Activated T-helper 1 cell treated with anti-CD3 and anti-CD28 coated beads, Interleukin-12 subunit alpha, Interleukin-12 subunit beta, Interleukin-2, Interleukin-4 antibody, amounts not matched to agents 30 ng/mL and 10 ng/mL and 1 ng/mL, durations not matched to agents 14 hours and 24 hours and 36 hours (primary cell): ENCODE measurements at regions of chr14 and their contacts with region 1.

Region 1: DNA sequence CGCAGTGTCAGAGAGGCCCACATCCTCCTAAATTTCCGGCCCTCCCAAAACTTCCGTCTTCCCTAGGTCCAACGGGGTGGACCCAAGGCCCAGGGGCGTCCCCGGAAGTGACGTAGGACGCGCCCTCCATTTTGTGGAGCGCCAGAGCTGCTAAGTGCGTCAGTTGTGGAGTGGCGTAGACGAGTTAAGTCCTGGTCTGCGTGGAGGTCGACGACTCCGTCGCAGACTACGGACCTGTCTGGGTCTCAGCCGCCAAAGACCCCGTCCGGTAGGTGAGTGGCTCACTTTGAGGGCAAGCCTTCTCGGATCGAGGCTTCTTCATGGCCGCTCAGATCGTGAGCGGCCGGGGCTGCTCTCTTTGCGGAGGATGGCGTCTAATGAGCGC is at the start of gene SRSF5:
- DNase-seq: peak; percentile 92
- H3K4me3 Mint-ChIP-seq: peak within 1 kb of the TSS; percentile 94
- H3K27ac Mint-ChIP-seq: peak within 1 kb of the TSS; percentile 98
- H3K4me1 Mint-ChIP-seq: peaks cover 68% of the 10 kb centered on the region
- H3K27me3 Mint-ChIP-seq: peaks cover 2% of the 10 kb centered on the region
- total RNA-seq, gene SRSF5: 304 and 311 TPM in 2 replicates

Region 2: GRCh38 chr14:69611201-69612011 is 155.6 kb before region 1 on chr14 and contains the start of gene SUSD6:
- intact Hi-C with region 1: loop called (anchors 1 kb)
- DNase-seq: peak; percentile 84
- H3K4me3 Mint-ChIP-seq: peak within 1 kb of the TSS; percentile 98
- H3K27ac Mint-ChIP-seq: peak within 1 kb of the TSS; percentile 93
- H3K4me1 Mint-ChIP-seq: peaks cover 61% of the 10 kb centered on the region
- H3K27me3 Mint-ChIP-seq: no peaks in the 10 kb centered on the region
- total RNA-seq, gene SUSD6: 91.3 and 94.3 TPM in 2 replicates

Region 3: DNA sequence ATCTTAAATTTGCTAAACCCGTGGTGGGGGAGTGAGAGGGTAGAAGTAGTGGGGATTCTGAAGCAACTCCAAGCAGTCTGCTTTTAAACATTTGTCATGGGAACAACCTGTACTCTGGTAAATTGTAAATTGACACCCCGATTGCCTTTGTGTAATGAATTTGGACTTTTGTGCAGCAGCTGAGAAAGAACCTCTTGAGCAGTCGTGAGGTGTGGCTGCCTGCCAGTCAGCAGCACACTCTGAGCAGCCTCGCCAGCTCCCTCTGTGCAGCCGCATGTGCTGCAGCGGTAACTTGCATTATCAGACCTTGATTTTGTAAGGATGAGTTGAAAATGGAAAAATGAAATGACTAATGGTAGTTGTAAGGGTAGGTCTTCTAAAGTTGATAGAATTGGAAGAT is 81.3 kb before region 1 on chr14:
- intact Hi-C with region 1: loop called (anchors 1 kb)
- DNase-seq: peak; percentile 32
- H3K4me3 Mint-ChIP-seq: peak overlapping the region; percentile 76
- H3K27ac Mint-ChIP-seq: peak overlapping the region; percentile 94
- H3K4me1 Mint-ChIP-seq: peaks cover 90% of the 10 kb centered on the region
- H3K27me3 Mint-ChIP-seq: no peaks in the 10 kb centered on the region

Region 4: DNA sequence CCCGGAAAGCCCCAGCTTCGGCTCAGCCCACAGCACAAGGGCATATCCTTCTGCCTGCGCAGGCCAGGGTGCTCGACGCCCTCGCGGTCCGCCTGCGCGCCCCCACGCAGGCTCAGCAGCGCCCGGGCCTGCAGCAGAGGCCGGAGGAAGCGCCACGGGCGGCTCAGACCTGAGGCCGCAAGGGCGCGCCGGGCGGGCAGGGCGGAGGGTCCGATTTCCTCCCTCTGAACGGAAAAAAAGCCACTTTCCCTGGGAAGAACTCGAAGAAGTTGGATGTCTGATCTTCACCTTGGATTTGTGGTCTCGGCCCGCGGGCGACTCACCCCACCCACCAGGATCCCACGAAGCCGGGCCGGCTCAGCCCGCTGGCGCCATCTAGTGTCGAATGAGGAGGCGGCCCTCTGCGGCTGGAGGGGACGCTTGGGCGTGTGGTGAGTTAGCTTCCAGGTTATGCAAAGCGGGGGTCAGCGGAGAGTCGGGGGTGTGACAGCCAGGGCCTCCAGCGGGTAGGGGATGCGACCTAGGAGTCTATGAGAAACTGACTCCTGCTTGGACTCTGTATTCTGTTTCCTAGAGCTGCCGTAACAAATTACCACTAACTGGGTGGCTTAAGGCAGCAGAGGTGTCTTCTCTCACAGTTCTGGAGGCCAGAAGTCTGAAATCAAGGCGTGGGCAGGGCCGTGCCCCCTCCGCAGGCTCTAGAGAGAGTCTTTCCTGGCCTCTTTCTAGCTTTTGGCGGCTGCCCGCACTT is 40.0 kb before region 1 on chr14:
- intact Hi-C with region 1: loop called (anchors 1 kb)
- DNase-seq: peak; percentile 76
- H3K4me3 Mint-ChIP-seq: peak overlapping the region; percentile 72
- H3K27ac Mint-ChIP-seq: peak overlapping the region; percentile 74
- H3K4me1 Mint-ChIP-seq: peaks cover 38% of the 10 kb centered on the region
- H3K27me3 Mint-ChIP-seq: no peaks in the 10 kb centered on the region

Region 5: GRCh38 chr14:70177081-70177800 is 410.3 kb after region 1 on chr14:
- intact Hi-C with region 1: no loop called
- DNase-seq: no peak
- H3K4me3 Mint-ChIP-seq: no peak overlapping the region
- H3K27ac Mint-ChIP-seq: no peak overlapping the region
- H3K4me1 Mint-ChIP-seq: no peaks in the 10 kb centered on the region
- H3K27me3 Mint-ChIP-seq: peaks cover 4% of the 10 kb centered on the region

Region 6: DNA sequence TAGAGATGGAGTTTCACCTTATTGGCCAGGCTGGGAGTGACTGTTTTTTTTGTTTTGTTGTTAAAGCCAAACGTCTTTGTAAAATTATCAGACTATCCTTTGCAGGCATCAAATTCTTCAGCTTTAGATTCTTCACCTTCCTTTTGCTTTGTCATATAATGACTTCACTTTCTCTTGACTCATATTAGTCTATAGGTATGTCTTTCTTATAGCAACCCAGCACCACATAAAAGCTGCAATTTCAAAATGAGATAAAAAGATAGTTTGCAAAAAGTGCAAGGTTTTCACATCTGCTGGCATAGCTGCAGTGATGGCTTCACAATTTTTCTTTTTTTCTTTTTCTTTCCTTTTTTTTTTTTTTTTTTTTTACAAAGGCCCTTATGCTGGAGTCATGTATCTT is 553.3 kb after region 1 on chr14:
- intact Hi-C with region 1: no loop called
- DNase-seq: no peak
- H3K4me3 Mint-ChIP-seq: no peak overlapping the region
- H3K27ac Mint-ChIP-seq: no peak overlapping the region
- H3K4me1 Mint-ChIP-seq: no peaks in the 10 kb centered on the region
- H3K27me3 Mint-ChIP-seq: peaks cover 8% of the 10 kb centered on the region

Region 7: DNA sequence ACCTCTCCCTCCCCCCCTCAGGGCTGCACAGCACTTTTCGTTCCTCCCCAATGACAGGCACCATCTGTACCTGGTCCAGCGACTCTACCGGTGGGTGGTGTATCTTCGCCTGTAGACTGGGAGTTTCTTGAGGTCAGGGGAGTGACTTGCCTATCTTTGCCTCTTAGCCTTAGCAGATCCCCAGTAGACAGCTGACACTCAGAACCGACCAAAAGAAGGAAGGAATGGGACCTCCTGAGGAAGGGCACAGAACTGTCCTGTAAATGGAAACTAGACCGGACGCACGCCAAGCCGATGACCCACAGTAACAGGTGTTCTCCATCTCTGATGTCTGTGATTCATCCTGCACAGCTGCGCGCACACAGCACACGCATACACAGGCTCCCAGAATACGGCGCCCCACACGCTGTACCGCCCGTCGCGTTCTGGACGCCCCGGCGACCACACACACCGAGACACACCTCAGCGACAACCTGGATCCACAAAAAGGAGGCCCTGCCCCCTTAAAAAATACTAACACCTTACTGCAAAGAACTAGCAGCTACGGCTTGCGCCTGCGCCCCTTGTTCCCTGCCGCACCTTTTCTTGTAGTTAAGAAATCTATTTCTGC is 874.1 kb after region 1 on chr14:
- intact Hi-C with region 1: loop called (anchors 5 kb)
- DNase-seq: peak; percentile 37
- H3K4me3 Mint-ChIP-seq: peak overlapping the region; percentile 97
- H3K27ac Mint-ChIP-seq: peak overlapping the region; percentile 88
- H3K4me1 Mint-ChIP-seq: peaks cover 45% of the 10 kb centered on the region
- H3K27me3 Mint-ChIP-seq: peaks cover 9% of the 10 kb centered on the region